ENCODE measurements at regions of chr2 and their contacts with region 1.

Region 1: DNA sequence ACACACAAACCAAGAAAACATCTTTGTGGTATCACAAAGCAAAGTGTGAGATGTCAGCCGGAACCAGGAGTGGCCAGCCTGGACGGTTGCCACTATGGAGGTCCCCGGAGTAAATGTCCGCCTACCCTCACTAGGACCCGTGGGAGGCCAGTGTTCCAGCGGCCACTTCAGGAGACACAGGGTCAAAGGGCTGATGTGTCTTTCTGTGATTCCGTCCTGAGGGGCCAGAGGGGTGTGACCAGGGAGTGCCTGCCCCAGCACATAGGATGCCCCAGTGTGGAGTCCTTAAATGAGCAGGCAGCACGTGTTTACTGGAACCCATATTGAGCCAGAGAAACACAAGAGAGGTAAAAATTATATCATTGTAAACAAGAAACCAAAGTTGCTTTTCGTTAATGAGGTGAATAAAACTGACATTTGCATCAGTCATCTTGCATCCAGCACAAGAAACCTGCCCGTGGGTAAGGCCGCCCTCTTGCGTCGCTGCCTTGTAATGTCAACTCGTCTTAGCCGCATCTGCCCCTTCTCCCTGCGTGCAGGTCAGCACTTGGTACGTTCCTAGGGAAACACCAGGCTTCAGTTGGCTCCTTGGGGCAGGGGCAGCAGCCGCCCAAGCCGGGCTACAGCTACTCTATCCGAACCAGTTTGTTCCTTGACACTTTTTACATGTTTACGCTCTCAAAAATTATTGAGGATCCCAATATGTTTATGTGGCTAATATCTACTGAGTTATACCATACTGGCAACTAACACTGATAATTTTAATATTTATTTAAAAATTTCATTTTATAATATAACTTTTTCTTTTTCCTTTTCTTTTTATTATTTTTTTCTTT is 46.7 kb upstream of the LAPTM4A start:
- DNase-seq: peak; percentile 79
- H3K4me3 Mint-ChIP-seq: no peak overlapping the region
- H3K27ac Mint-ChIP-seq: no peak overlapping the region
- H3K4me1 Mint-ChIP-seq: peaks cover 3% of the 10 kb centered on the region
- H3K27me3 Mint-ChIP-seq: peaks cover 21% of the 10 kb centered on the region

Region 2: GRCh38 chr2:19955544-19956422 is 142.3 kb before region 1 on chr2:
- CTCF ChIA-PET with region 1: interaction called, 15 read pairs
- POLR2A ChIA-PET with region 1: no interaction called
- DNase-seq: peak; percentile 56
- H3K4me3 Mint-ChIP-seq: no peak overlapping the region
- H3K27ac Mint-ChIP-seq: no peak overlapping the region
- H3K4me1 Mint-ChIP-seq: no peaks in the 10 kb centered on the region
- H3K27me3 Mint-ChIP-seq: no peaks in the 10 kb centered on the region

Region 3: DNA sequence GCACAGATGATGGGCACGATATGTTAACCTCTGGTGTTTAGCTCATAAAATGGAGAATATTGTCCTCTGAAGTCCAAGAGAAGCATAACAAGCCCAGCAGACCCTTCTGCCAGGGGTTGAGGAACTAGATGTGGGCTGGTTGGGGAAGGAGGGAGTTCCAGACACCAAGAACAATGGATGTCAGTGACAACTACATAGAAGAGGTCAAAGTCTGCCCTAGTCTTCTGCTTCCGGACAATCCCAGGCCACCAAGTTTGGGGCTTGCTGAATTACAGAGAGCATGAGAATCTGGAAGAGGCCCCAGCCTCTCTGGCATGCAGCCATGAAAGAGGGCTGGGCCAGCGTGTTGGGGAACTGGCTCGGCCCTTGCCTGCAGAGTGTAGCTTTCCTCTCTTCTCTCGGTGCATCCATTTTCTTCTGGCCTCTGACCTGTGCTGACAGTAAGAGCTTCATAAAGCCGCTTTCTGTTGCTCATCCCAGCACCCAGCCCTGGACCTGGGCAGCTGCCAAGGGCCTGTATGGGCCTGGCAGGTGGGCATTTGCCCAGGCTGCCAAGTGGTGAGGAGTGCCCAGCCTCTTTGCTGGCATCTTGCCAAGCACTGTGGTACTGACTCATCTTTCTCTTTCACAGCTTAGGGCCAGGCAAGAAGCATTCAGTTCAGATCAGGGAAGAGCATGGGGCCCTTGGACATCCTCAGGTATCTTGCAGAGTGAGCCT is 32.1 kb before region 1 on chr2:
- CTCF ChIA-PET with region 1: no interaction called
- POLR2A ChIA-PET with region 1: no interaction called
- DNase-seq: no peak
- H3K4me3 Mint-ChIP-seq: no peak overlapping the region
- H3K27ac Mint-ChIP-seq: no peak overlapping the region
- H3K4me1 Mint-ChIP-seq: no peaks in the 10 kb centered on the region
- H3K27me3 Mint-ChIP-seq: peaks cover 4% of the 10 kb centered on the region

Region 4: GRCh38 chr2:20108655-20109396 is 10.7 kb after region 1 on chr2:
- CTCF ChIA-PET with region 1: no interaction called
- POLR2A ChIA-PET with region 1: no interaction called
- DNase-seq: no peak
- H3K4me3 Mint-ChIP-seq: no peak overlapping the region
- H3K27ac Mint-ChIP-seq: no peak overlapping the region
- H3K4me1 Mint-ChIP-seq: peaks cover 11% of the 10 kb centered on the region
- H3K27me3 Mint-ChIP-seq: peaks cover 9% of the 10 kb centered on the region